ENCODE measurements at regions of chr3 and their contacts with region 1.

Region 1: DNA sequence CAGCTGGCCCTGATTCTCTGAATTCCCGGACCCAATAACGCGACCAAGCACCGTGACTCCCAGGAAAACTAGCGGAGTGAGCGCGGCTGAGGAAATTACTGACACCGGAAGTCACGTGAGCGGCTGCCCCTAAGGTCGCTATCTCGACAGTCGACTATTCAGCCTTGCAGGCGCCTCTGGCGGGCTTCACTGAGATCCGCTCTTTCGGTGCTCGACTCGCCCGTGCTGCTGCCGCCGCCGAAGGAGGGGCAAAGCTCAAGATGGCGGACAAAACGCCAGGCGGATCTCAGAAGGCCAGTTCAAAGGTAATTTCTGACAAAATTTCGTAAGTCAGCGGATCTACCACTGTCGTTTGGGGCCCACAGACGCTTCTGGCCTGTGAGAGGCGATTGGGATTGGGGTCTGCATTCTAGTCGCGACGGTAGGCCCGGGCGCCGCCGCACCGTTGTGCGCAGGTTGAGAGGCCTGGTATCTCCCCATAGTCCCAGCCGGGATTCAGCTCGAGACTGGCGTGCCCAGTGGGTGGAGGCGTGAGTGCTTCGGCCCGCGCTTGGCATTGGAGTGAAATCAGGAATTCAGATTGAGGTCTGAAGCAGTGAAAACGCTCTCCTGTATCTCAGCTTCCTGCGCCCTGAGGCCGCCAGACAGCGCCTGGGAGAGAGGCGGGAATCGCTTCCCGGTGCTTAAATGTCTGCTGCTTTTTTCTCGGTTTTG is at the start of gene U2SURP:
- DNase-seq: peak; percentile 81
- ATAC-seq: peak; percentile 89
- H3K4me3 ChIP-seq: peak within 1 kb of the TSS; percentile 88
- H3K27ac ChIP-seq: peak within 1 kb of the TSS; percentile 89
- H3K4me1 ChIP-seq: peaks cover 2% of the 10 kb centered on the region; the same call in 1 of the 2 replicates
- H3K27me3 ChIP-seq: no peaks in the 10 kb centered on the region
- CTCF ChIP-seq: no peak
- EP300 ChIP-seq: peak in 1 of 2 experiments; percentile 31; a peak in 1 of 4 replicates
- POLR2A ChIP-seq: peak; percentile 87
- RAD21 ChIP-seq: no peak
- polyA plus RNA-seq, gene U2SURP: 146 to 277 TPM

Region 2: DNA sequence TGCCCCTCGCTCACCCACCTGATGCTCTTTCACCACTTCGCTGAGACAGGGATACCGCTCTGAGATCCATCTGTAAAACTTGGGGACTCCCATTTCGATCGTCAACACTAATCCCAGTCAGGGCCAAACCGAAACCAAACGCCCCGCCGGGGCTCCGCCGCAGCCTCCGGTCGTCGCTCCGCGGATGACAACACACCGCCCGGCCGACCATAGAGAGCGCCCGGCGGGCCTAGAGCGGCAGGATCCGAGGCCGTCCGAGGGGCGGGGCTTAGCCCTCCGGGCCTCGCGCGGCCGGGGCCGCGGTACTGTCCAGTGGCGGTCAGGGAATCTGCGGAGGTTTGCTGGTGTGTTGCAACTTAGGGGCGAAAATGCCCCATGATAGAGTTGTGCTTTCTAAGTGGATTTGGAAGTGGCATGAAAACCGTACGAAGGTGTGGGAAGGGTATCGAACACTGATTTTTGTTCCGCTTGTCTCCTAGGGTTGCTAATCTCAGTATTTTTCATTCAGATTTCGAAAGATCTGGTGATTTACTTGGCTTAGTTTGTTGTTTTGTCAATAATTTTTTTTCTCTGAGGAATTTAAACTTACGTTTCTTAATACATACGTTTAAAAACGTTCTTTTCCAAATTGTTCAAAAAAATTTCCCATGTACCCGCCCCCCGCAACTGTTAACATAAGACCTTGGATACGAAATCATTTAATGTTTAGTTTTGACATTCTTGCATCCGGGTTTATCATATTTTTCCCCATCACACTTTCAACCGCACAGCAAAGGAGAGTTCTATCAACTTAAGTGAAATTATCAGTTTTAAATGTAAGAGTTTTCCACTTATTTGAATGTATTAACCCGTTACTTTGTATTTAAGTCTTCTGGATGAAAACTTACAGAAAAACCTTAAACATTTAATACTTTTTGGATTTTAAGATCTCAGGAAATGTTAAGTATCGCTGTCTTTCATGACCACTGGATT is 553.4 kb before region 1 on chr3 and contains the start of gene XRN1:
- CTCF ChIA-PET with region 1: no interaction called
- POLR2A ChIA-PET with region 1: no interaction called
- RAD21 ChIA-PET with region 1: no interaction called
- SMC1A ChIA-PET with region 1: interaction called, 3 read pairs
- in situ Hi-C with region 1: no loop called
- intact Hi-C with region 1: loop called (anchors 5 kb)
- DNase-seq: peak; percentile 57
- ATAC-seq: peak; percentile 94
- H3K4me3 ChIP-seq: peak within 1 kb of the TSS; percentile 87
- H3K27ac ChIP-seq: peak within 1 kb of the TSS; percentile 97
- H3K4me1 ChIP-seq: no peaks in the 10 kb centered on the region
- H3K27me3 ChIP-seq: no peaks in the 10 kb centered on the region
- CTCF ChIP-seq: no peak
- EP300 ChIP-seq: no peak
- POLR2A ChIP-seq: peak; percentile 93
- RAD21 ChIP-seq: no peak
- polyA plus RNA-seq, gene XRN1: 1.7 to 7.5 TPM

Region 3: DNA sequence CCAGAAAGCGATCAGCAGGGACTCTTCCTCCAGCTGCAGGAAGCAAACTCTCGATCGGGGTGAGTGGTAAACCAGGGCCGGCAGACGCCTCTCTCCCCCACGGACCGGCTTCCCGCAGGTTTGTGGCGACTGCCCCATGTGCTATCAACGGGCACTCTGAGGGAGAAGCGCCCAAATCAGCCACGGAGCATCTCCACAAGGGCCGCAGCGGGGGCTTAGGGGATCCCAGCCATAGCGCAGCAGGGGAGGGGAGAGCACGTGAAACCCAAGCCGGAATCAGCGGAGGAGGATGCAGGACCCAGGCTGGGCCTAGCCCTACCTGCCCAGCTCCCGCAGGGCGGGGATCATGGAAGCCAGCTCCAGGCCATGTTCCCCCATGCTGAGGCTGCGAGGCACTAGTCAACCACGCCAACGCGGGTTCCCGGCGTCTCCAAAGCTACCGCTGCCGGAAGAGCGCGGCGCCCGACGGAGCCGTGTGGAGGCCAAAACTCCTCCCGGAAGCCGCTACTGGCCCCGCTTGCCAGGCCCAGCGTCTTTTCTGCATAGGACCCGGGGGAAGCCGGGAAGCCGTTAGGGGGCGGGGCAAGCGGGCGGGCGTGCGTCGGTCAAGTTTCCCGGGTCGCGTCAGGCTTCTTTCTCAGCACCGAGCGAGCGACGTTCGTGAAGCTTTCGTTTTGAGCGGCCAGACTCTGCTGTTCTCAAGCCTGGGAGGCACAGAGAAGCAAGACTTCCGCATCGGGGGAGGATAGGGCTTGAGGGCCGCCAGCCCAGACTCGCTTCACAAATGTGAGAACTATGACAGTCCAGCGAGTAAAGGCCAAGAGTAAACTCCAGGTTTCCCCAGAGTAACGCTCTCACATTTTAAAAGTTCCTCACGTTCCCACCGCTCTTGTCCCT is 423.0 kb before region 1 on chr3 and contains the start of gene ATR:
- CTCF ChIA-PET with region 1: no interaction called
- POLR2A ChIA-PET with region 1: interaction called, 5 read pairs
- RAD21 ChIA-PET with region 1: interaction called, 5 read pairs
- SMC1A ChIA-PET with region 1: interaction called, 4 read pairs
- in situ Hi-C with region 1: no loop called
- intact Hi-C with region 1: loop called (anchors 5 kb)
- DNase-seq: peak; percentile 87
- ATAC-seq: peak; percentile 95
- H3K4me3 ChIP-seq: peak within 1 kb of the TSS; percentile 96
- H3K27ac ChIP-seq: peak within 1 kb of the TSS; percentile 94
- H3K4me1 ChIP-seq: no peaks in the 10 kb centered on the region
- H3K27me3 ChIP-seq: no peaks in the 10 kb centered on the region
- CTCF ChIP-seq: 0 out of 6 replicates have a peak, but pooled peaks of 1 of the 3 experiments have one; percentile 3
- EP300 ChIP-seq: peak in 1 of 2 experiments; percentile 49; a peak in 1 of 4 replicates
- POLR2A ChIP-seq: peak; percentile 98
- RAD21 ChIP-seq: no peak
- polyA plus RNA-seq, gene ATR: 25.8 to 29.0 TPM

Region 4: GRCh38 chr3:142929109-142929508 is 72.4 kb before region 1 on chr3:
- CTCF ChIA-PET with region 1: interaction called, 10 read pairs
- POLR2A ChIA-PET with region 1: no interaction called
- RAD21 ChIA-PET with region 1: interaction called, 4 read pairs
- SMC1A ChIA-PET with region 1: no interaction called
- in situ Hi-C with region 1: no loop called
- intact Hi-C with region 1: no loop called
- DNase-seq: no peak
- ATAC-seq: peak; percentile 92
- H3K4me3 ChIP-seq: no peak overlapping the region
- H3K27ac ChIP-seq: no peak overlapping the region
- H3K4me1 ChIP-seq: no peaks in the 10 kb centered on the region
- H3K27me3 ChIP-seq: no peaks in the 10 kb centered on the region
- CTCF ChIP-seq: peak; percentile 60 to 67 (median 63); a peak in 5 of 6 replicates
- EP300 ChIP-seq: no peak
- POLR2A ChIP-seq: no peak
- RAD21 ChIP-seq: peak; percentile 65

Region 5: DNA sequence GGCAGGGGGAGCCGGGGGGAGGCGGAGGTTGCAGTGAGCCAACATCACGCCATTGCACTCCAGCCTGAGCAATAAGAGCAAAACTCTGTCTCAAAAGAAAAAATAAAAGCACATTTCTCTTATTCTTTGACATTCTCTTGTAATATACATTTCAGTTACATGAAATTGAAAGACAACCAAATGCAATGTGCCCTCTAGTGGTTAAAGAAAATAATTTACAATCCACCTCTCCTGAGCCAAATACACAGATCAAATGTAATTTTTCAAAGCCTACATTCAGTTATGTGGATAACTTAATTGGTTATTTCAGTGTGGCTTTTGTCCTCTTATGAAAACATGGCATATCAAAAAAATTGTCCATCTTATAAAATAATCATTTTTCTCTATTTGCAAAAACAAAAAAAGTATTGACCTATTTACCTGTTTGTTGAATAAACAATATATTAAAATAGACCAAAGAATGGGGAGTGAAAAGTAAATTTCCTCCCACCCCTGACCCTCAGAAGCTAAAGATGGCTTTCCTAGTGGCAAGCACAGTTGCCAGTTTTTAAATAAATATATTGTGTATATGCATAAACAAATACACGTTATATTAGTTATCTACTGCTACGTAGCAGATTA is 14.3 kb before region 1 on chr3:
- CTCF ChIA-PET with region 1: interaction called, 22 read pairs
- POLR2A ChIA-PET with region 1: interaction called, 15 read pairs
- RAD21 ChIA-PET with region 1: interaction called, 16 read pairs
- SMC1A ChIA-PET with region 1: interaction called, 16 read pairs
- in situ Hi-C with region 1: no loop called
- intact Hi-C with region 1: no loop called
- DNase-seq: no peak
- ATAC-seq: peak; percentile 72
- H3K4me3 ChIP-seq: no peak overlapping the region
- H3K27ac ChIP-seq: no peak overlapping the region
- H3K4me1 ChIP-seq: 0 out of 2 replicates have a peak, but pooled peaks cover 3% of the 10 kb centered on the region
- H3K27me3 ChIP-seq: no peaks in the 10 kb centered on the region
- CTCF ChIP-seq: peak; percentile 49 to 61 (median 56); a peak in 5 of 6 replicates
- EP300 ChIP-seq: no peak
- POLR2A ChIP-seq: no peak
- RAD21 ChIP-seq: peak; percentile 63

Region 6: DNA sequence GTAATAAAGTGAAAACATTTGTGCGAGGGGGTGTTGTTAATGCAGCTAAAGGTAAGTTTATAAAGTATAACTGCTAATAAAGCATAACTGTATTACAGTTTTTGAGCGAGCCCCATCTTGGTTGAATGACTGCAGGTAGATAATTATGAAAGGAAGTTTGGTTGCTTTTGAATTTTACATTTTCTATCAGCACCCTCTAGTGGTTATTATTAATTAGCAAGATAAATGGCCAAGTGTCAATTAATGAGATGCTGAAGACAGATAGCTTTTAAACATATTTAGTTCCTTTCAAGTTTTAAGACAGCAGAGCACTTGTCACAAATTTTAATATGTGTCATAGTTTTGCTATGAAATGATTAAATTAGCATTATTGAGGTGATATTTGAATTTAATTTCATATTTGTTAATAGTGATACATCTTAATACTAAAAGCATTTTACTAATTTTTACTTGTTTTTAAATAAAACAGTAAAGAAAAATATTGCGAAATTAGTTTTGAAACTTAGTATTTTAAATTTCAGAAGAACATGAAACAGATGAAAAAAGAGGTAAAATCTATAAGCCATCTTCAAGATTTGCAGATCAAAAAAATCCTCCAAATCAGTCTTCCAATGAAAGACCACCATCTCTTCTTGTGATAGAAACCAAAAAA is 14.9 kb after region 1 on chr3:
- CTCF ChIA-PET with region 1: interaction called, 52 read pairs
- POLR2A ChIA-PET with region 1: interaction called, 21 read pairs
- RAD21 ChIA-PET with region 1: interaction called, 23 read pairs
- SMC1A ChIA-PET with region 1: interaction called, 27 read pairs
- in situ Hi-C with region 1: no loop called
- intact Hi-C with region 1: no loop called
- DNase-seq: no peak
- ATAC-seq: peak; percentile 65
- H3K4me3 ChIP-seq: no peak overlapping the region; the same call in 1 of the 2 replicates
- H3K27ac ChIP-seq: no peak overlapping the region
- H3K4me1 ChIP-seq: no peaks in the 10 kb centered on the region; the same call in 1 of the 2 replicates
- H3K27me3 ChIP-seq: no peaks in the 10 kb centered on the region
- CTCF ChIP-seq: peak; percentile 28 to 50 (median 45); a peak in 3 of 6 replicates
- EP300 ChIP-seq: no peak
- POLR2A ChIP-seq: no peak
- RAD21 ChIP-seq: peak; percentile 33; the same call in 1 of the 2 replicates

Measured in GM12878 (cell line).